ENCODE measurements at regions of chr12 and their contacts with region 1.

Region 1: GRCh38 chr12:100668945-100669536 is 95.6 kb downstream of the GAS2L3 start:
- DNase-seq: peak; percentile 55
- H3K4me3 ChIP-seq: no peak overlapping the region
- H3K27ac ChIP-seq: no peak overlapping the region
- H3K4me1 ChIP-seq: no peaks in the 10 kb centered on the region
- CTCF ChIP-seq: peak; percentile 95

Region 2: GRCh38 chr12:100356644-100357223 is 312.3 kb before region 1 on chr12 and contains the start of gene SLC17A8:
- CTCF ChIA-PET with region 1: no interaction called
- POLR2A ChIA-PET with region 1: no interaction called
- intact Hi-C with region 1: loop called (anchors 5 kb)
- DNase-seq: no peak
- H3K4me3 ChIP-seq: no peak within 1 kb of the TSS
- H3K27ac ChIP-seq: no peak within 1 kb of the TSS
- H3K4me1 ChIP-seq: no peaks in the 10 kb centered on the region
- CTCF ChIP-seq: no peak
- total RNA-seq, gene SLC17A8: not detected in 2 replicates

Region 3: GRCh38 chr12:100741084-100741711 is 72.2 kb after region 1 on chr12:
- CTCF ChIA-PET with region 1: no interaction called
- POLR2A ChIA-PET with region 1: no interaction called
- intact Hi-C with region 1: loop called (anchors 1 kb)
- DNase-seq: peak; percentile 44
- H3K4me3 ChIP-seq: no peak overlapping the region
- H3K27ac ChIP-seq: no peak overlapping the region
- H3K4me1 ChIP-seq: no peaks in the 10 kb centered on the region
- CTCF ChIP-seq: peak; percentile 92